ENCODE measurements at regions of chrX and their contacts with region 1.

Region 1: GRCh38 chrX:101415180-101416145 is 7.4 kb downstream of the HNRNPH2 start:
- DNase-seq: no peak
- H3K4me3 Mint-ChIP-seq: peak overlapping the region; percentile 48
- H3K27ac Mint-ChIP-seq: peak overlapping the region; percentile 82
- H3K4me1 Mint-ChIP-seq: peaks cover 47% of the 10 kb centered on the region
- H3K27me3 Mint-ChIP-seq: no peaks in the 10 kb centered on the region

Region 2: DNA sequence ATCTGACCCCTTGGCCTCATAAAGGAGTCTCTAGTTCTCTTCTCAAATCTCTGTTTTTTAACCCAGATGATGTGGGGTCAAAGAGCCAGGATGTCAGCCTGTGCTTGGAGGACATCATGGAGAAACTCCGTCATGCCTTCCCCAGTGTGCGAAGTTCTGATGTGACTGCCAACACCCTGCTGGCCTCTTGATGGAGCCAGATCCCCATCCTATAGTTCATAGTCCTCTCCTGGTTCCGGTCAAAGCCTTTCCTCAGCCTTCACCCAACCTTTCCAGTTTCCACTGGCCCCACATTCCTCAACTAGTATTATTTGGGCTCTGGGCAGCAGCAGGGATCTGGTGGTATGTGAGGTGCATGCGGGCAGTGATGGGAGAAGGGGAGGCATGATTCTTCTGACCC is 155.0 kb before region 1 on chrX:
- CTCF ChIA-PET with region 1: no interaction called
- POLR2A ChIA-PET with region 1: no interaction called
- intact Hi-C with region 1: no loop called
- DNase-seq: no peak
- H3K4me3 Mint-ChIP-seq: no peak overlapping the region
- H3K27ac Mint-ChIP-seq: no peak overlapping the region
- H3K4me1 Mint-ChIP-seq: peaks cover 3% of the 10 kb centered on the region
- H3K27me3 Mint-ChIP-seq: no peaks in the 10 kb centered on the region

Region 3: GRCh38 chrX:101390664-101391525 is 24.6 kb before region 1 on chrX and contains the start of gene RPL36A:
- CTCF ChIA-PET with region 1: interaction called, 7 read pairs
- POLR2A ChIA-PET with region 1: interaction called, 16 read pairs
- intact Hi-C with region 1: no loop called
- DNase-seq: peak; percentile 89
- H3K4me3 Mint-ChIP-seq: peak within 1 kb of the TSS; percentile 94
- H3K27ac Mint-ChIP-seq: peak within 1 kb of the TSS; percentile 96
- H3K4me1 Mint-ChIP-seq: peaks cover 15% of the 10 kb centered on the region
- H3K27me3 Mint-ChIP-seq: no peaks in the 10 kb centered on the region
- total RNA-seq, gene RPL36A: 364 to 420 TPM

Region 4: GRCh38 chrX:101485199-101485949 is 69.9 kb after region 1 on chrX and contains the start of gene ARMCX4:
- CTCF ChIA-PET with region 1: interaction called, 4 read pairs
- POLR2A ChIA-PET with region 1: interaction called, 4 read pairs
- intact Hi-C with region 1: loop called (anchors 5 kb)
- DNase-seq: peak; percentile 60
- H3K4me3 Mint-ChIP-seq: peak within 1 kb of the TSS; percentile 73
- H3K27ac Mint-ChIP-seq: no peak within 1 kb of the TSS
- H3K4me1 Mint-ChIP-seq: peaks cover 7% of the 10 kb centered on the region
- H3K27me3 Mint-ChIP-seq: peaks cover 2% of the 10 kb centered on the region
- total RNA-seq, gene ARMCX4: 5.4 to 6.3 TPM

Region 5: DNA sequence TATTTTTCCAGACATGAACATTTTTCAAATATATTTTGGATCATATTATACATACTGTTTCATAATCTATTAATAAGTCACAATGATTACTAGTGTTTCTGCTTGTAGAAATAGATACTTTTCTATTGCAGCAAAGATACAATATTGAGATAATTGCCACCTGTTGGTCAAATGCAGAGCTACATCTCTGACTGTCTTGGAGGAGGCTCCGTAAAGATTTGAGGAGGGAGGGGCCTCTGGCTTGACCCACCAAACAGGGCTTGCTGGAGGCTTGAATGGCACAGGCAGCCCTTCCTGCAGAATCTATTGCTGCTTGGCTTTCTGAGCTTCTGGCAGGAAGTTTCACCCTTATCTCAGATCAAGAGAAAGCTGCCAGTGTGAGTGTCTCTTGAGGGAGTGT is 343.5 kb after region 1 on chrX:
- CTCF ChIA-PET with region 1: interaction called, 10 read pairs
- POLR2A ChIA-PET with region 1: no interaction called
- intact Hi-C with region 1: loop called (anchors 1 kb)
- DNase-seq: peak; percentile 19
- H3K4me3 Mint-ChIP-seq: no peak overlapping the region
- H3K27ac Mint-ChIP-seq: no peak overlapping the region
- H3K4me1 Mint-ChIP-seq: no peaks in the 10 kb centered on the region
- H3K27me3 Mint-ChIP-seq: peaks cover 2% of the 10 kb centered on the region

Region 6: DNA sequence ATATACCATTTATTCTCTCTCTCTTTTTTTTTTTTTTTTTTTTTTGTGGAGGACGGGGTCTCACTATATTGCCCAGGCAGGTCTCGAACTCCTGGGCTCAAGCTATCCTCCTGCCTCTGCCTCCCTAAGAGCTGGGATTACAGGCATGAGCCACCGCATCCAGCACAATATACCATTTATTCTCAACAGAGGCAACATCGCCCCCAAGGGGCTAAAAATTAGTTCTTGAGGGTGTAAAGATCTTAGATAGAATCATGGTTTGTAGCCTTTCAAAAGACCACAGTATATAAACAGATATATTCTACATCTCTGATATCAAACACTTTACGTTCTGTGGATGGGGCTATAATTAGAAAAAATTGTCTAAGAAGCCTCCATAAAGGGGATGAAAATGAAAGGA is 670.2 kb after region 1 on chrX:
- CTCF ChIA-PET with region 1: no interaction called
- POLR2A ChIA-PET with region 1: no interaction called
- intact Hi-C with region 1: loop called (anchors 10 kb)
- DNase-seq: no peak
- H3K4me3 Mint-ChIP-seq: no peak overlapping the region
- H3K27ac Mint-ChIP-seq: no peak overlapping the region
- H3K4me1 Mint-ChIP-seq: no peaks in the 10 kb centered on the region
- H3K27me3 Mint-ChIP-seq: peaks cover 8% of the 10 kb centered on the region

Region 7: DNA sequence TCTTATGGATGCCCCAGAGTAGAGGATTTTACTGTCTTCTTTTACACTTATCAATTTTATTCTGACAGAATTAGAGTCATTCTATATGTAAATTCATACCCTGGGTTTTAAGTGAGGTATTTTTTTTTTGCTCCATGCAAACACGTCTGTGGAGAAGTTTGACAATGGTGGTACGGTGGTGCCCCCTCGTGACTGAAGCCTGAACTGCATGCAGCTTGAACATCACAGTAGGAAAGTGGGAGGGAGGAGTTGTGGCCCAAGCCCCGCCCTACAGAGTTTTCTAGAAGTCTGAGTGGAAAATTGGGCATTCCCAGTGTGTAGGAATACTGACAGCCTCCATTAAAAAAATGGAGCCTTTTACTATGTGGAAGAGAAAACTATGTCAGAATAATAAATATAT is 1448.3 kb after region 1 on chrX:
- CTCF ChIA-PET with region 1: no interaction called
- POLR2A ChIA-PET with region 1: no interaction called
- intact Hi-C with region 1: loop called (anchors 10 kb)
- DNase-seq: peak; percentile 87
- H3K4me3 Mint-ChIP-seq: no peak overlapping the region
- H3K27ac Mint-ChIP-seq: no peak overlapping the region
- H3K4me1 Mint-ChIP-seq: no peaks in the 10 kb centered on the region
- H3K27me3 Mint-ChIP-seq: no peaks in the 10 kb centered on the region

Measured in activated CD4-positive, alpha-beta memory T cell treated with anti-CD3 and anti-CD28 coated beads for 36 hours (primary cell).